ENCODE measurements at regions of chr1 and their contacts with region 1.

Region 1: DNA sequence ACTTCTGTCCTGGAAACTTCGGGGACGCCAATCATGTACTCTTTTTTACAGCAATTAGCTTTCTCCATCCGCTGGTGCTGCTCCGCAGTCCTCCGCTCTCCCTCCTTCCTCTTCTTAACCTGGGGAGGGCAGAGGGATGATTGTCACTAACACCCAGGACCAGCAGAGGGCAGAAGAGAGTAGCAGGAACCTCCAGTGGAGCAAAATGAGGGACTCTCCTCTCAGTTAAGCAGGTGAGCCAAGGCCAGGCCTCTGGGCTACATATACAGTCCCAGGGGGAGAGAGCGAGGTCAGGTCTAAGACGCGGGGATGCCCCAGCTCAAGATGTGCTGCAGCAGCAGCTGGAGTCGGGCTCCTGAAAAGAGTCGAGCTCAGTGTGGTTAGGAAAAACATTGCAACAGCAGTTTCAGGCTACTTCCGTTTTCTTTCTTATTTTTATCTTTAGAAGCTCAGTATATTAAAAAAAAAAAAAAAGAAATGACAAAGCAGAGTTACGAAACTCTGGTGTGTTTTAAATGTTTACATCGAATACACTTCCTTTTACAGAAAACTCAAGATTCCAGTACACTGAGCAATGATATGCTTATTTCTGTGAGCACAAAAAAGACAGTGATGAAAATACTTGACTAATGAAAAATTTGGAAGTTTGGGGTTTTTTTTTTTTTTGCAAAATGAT is 25.7 kb upstream of the NLRP3 start:
- H3K4me3 Mint-ChIP-seq: peak overlapping the region; percentile 74
- H3K27ac Mint-ChIP-seq: peak overlapping the region; percentile 95
- H3K4me1 Mint-ChIP-seq: peaks cover 68% of the 10 kb centered on the region
- H3K27me3 Mint-ChIP-seq: no peaks in the 10 kb centered on the region

Region 2: GRCh38 chr1:247407180-247407616 is 16.9 kb after region 1 on chr1:
- intact Hi-C with region 1: loop called (anchors 1 kb)
- H3K4me3 Mint-ChIP-seq: no peak overlapping the region
- H3K27ac Mint-ChIP-seq: peak overlapping the region; percentile 95
- H3K4me1 Mint-ChIP-seq: peaks cover 77% of the 10 kb centered on the region
- H3K27me3 Mint-ChIP-seq: no peaks in the 10 kb centered on the region

Region 3: DNA sequence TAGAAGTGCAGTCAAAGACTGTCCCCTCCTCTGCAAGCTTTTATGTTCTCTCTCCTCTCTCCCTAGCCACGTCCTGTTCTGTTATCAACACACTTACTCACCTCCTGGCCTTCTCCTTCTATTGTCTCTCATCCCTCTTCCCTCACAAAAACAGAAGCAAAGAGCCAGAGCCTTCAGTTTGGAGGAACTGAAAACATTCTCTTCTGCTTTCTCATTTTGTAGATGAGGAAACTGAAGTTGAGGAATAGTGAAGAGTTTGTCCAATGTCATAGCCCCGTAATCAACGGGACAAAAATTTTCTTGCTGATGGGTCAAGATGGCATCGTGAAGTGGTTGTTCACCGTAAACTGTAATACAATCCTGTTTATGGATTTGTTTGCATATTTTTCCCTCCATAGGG is 27.6 kb after region 1 on chr1:
- intact Hi-C with region 1: no loop called
- H3K4me3 Mint-ChIP-seq: peak overlapping the region; percentile 87
- H3K27ac Mint-ChIP-seq: peak overlapping the region; percentile 87
- H3K4me1 Mint-ChIP-seq: peaks cover 74% of the 10 kb centered on the region
- H3K27me3 Mint-ChIP-seq: no peaks in the 10 kb centered on the region

Region 4: DNA sequence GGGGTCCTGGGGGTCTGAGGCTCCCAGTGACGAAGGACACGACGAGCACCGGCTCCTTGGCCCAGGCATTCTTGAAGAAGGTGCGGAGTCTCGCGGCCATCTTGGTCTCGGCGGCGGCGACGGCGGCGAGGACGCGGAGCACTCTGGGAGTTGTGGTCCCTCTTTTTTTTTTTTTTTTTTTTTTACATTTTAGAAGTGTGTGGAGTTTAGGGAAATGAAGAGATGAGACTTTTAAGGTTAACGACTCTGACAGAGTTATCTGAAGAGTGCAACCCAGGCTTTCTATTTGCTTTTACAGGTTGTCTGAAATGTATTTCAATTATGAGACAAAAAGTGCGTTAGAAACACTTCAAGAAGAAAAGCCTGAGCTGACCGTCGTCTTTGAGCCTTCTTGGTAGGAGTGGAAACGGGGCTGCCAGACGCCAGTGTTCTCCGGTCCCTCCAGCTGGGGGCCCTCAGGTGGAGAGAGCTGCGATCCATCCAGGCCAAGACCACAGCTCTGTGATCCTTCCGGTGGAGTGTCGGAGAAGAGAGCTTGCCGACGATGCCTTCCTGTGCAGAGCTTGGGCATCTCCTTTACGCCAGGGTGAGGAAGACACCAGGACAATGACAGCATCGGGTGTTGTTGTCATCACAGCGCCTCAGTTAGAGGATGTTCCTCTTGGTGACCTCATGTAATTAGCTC is 58.0 kb after region 1 on chr1:
- intact Hi-C with region 1: loop called (anchors 5 kb)
- H3K4me3 Mint-ChIP-seq: peak overlapping the region; percentile 35
- H3K27ac Mint-ChIP-seq: peak overlapping the region; percentile 89
- H3K4me1 Mint-ChIP-seq: peaks cover 84% of the 10 kb centered on the region
- H3K27me3 Mint-ChIP-seq: no peaks in the 10 kb centered on the region

Measured in dendritic cell treated with granulocyte-macrophage colony-stimulating factor and Interleukin-4, amounts not matched to agents 40 ng/mL and 50 ng/mL, for 4 days (primary cell).